Lower leg skin (tissue), 4 donors: ENCODE measurements at regions of chr12 and their contacts with region 1.

Region 1: GRCh38 chr12:63843721-63844390 is 644 bp upstream of the SRGAP1 start:
- DNase-seq: peak; percentile 82 to 96
- H3K4me3 ChIP-seq: peak overlapping the region; percentile 75
- CTCF ChIP-seq: peak in 1 of 3 donors; percentile 71
- POLR2A ChIP-seq: no peak

Region 2: GRCh38 chr12:63869624-63870023 is 25.8 kb after region 1 on chr12:
- intact Hi-C with region 1: no loop called
- DNase-seq: no peak
- H3K4me3 ChIP-seq: no peak overlapping the region
- CTCF ChIP-seq: no peak
- POLR2A ChIP-seq: no peak

Region 3: DNA sequence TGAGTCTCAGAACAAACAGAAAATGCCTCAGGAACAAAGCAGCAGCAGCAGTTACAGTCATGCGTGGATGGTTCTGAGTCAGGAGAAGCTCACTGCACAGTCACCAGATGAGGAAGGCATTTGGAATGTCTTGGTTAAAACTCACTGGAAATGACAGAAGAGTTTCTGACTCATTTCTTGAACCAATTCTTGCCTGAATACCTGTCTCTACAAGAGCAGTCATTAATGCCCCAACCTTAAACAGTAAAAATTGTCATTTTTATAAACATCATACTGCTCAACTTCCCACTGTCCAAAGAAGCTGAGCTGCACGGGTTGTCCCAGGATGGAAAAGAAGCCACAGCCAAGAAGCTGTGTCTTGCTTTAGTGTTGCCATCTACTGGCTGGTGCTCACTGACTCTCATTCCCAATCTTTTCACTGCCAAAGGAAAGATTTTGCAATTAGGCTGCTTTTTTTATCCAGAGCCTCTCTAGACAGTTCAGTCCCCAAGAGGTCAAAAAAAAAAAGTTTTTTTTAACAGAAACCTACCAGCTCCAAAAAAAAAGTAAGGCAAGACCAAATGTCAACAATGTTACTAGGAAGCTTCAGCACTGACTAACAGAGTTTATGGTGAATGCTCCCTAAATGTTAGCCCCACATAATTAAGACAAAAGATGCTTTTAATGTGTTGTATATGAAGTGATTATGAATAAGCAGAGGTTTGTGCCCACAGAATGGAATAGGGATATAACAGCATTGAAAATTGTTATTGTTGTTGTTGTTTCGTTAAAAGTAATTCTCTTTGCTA is 337.8 kb after region 1 on chr12:
- intact Hi-C with region 1: loop called (anchors 5 kb)
- DNase-seq: peak in 1 of 2 donors; percentile 47
- H3K4me3 ChIP-seq: no peak overlapping the region
- CTCF ChIP-seq: no peak
- POLR2A ChIP-seq: no peak

Region 4: DNA sequence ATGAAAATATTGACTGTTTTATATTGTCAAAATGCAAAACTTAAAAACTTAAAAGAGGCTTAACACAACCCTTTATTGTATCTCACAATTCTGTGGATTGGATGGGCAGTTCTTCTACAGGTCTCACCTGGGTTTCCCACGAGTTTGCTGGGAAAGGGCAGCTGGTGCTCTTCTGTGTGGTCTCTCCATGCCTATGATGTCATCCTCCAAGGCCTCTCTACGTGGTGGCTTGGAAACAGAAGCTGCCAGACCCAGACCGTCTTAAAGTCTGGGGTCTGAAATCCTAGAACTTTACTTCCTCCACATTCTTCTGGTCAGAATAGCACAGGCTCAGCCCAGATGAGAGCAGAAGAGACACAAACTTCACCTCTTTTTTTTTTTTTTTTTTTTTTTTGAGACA is 414.7 kb after region 1 on chr12:
- intact Hi-C with region 1: loop called (anchors 1 kb)
- DNase-seq: no peak
- H3K4me3 ChIP-seq: no peak overlapping the region
- CTCF ChIP-seq: no peak
- POLR2A ChIP-seq: no peak

Region 5: DNA sequence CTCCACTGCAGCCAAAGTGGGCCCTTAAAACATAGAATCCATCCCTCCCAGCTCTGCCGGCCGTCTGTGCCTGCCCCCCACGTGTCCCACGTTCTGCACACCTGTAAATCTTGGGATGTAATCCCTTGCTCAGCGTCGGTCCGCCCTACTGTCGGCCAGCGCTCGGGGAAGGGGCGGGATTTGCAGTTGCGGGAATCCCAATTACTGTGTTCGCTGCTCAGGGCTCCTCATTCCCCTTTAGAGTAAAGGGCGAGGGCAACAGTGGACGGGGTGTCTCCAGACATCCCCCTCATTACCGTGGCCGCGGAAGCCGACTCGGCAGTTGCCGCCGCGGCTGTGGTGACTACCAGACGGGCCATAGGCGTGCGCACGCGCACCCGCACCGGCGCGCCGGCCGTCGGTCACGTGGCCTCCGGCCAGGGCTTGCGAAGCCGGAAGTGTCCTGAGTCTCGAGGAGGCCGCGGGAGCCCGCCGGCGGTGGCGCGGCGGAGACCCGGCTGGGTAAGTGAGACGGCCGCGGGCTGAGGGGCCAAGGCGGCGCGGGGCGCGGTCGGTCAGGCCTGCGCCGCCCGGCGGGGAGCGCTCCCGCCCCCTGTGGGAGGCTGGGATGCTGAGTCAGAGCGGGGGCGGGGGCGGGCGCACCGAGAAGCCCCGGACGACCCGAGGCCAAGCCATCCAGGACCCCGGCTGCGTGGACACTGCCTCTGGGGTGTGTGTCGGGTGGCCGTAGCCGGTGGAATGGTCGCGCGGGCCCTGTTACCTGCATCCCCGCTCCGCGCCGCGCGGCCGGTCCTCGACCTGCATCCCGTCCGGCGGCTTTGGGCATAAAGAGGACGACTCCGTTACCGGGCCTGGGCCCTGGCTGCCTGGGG is 608.1 kb after region 1 on chr12 and contains the start of gene TBK1:
- intact Hi-C with region 1: no loop called
- DNase-seq: peak; percentile 82 to 97
- H3K4me3 ChIP-seq: peak within 1 kb of the TSS; percentile 91
- CTCF ChIP-seq: no peak
- POLR2A ChIP-seq: peak in 1 of 2 donors; percentile 49
- total RNA-seq, gene TBK1: 16.3 to 30.1 (median 17.3) TPM